ENCODE measurements at regions of chr19 and their contacts with region 1.

Region 1: GRCh38 chr19:18419195-18419698 is at the start of gene SSBP4:
- DNase-seq: peak; percentile 48 to 80
- H3K4me3 ChIP-seq: peak within 1 kb of the TSS; percentile 68
- H3K27ac ChIP-seq: no peak within 1 kb of the TSS
- H3K4me1 ChIP-seq: peaks cover 52% of the 10 kb centered on the region
- H3K27me3 ChIP-seq: no peaks in the 10 kb centered on the region
- CTCF ChIP-seq: no peak; the same call in 1 of the 2 replicates
- total RNA-seq, gene SSBP4: 56.6 and 65.2 TPM in 2 replicates

Region 2: DNA sequence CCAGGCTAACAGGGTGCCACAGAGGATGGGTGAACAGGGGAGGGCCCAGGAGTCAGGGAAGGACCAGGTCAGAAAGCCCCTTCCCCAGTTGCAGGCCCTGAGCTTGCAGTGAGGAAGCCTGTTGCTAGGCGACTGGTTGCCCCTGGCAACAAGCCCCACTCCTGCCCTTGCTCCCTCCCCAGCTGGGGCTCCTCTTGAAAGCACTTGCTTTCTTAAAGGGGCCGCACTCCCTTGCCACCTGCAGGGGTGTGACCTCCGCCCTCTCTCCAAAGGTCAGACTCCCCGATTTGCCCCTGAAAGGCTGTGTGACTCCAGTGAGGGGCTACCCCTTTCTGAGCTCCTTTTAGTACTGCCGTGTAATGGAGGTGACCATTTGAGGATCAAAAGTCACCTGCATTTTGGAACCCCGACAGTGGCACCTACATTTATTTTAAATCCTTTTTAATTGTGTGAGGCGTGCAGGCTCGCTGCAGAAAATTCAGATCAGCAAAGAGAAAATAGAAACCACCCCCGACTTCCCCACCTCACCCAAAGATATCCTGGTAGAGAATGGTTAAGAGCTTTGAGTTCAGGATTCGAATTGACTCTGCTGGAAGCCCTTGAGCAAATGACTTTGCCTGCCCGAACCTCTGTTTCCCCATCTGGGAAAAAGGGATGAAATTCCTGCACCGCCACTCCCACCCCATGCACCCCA is 663.1 kb before region 1 on chr19:
- CTCF ChIA-PET with region 1: no interaction called
- POLR2A ChIA-PET with region 1: no interaction called
- intact Hi-C with region 1: no loop called
- DNase-seq: peak in 1 of 2 experiments; percentile 29
- H3K4me3 ChIP-seq: no peak overlapping the region
- H3K27ac ChIP-seq: no peak overlapping the region
- H3K4me1 ChIP-seq: no peaks in the 10 kb centered on the region
- H3K27me3 ChIP-seq: no peaks in the 10 kb centered on the region
- CTCF ChIP-seq: no peak

Region 3: DNA sequence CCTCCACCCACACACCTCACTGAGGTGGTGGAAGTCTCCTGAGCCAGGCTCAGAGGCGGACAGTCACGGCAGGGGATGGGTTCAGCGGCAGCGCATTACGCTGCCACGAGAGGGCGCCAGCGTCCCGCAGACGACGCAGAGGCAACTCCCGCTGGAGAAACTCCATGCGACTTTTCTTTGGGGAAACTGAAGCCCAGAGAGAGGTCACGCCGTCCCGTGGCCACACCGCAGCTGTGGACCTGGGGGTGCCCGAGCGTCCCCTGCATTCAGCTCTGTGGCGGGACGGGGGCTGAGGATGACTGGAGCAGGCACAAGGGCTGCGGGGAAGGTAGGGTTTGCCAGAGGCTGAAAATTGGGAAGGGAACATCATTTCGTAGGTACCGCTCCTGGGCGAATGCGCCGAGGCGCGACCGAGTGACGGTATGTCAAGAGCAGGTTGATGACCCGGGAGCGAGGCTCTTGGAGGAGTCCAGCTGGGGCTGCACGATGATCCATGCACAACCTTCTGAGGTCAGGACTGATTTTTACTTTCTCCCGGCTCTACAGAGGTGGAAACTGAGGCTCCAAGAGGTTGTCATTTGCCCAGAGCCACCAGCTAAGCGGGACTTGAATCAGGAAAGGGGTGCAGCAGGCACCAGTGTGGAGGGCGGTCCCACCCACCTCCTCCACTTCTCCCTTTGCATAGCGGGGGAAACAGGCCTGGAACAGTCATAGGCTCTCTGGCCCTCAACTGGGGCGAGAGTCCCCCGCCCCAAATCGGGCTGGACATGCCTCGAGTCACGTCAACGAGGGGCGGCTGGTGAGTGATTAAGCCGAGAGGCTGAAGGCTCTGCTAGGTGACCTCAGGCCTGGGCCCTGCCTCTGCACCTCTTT is 412.0 kb before region 1 on chr19:
- CTCF ChIA-PET with region 1: no interaction called
- POLR2A ChIA-PET with region 1: no interaction called
- intact Hi-C with region 1: loop called (anchors 5 kb)
- DNase-seq: peak; percentile 63 to 80
- H3K4me3 ChIP-seq: peak overlapping the region; percentile 29
- H3K27ac ChIP-seq: no peak overlapping the region
- H3K4me1 ChIP-seq: peaks cover 9% of the 10 kb centered on the region; the same call in 1 of the 2 replicates
- H3K27me3 ChIP-seq: no peaks in the 10 kb centered on the region
- CTCF ChIP-seq: peak; percentile 98

Region 4: GRCh38 chr19:18152444-18152816 is 266.8 kb before region 1 on chr19:
- CTCF ChIA-PET with region 1: no interaction called
- POLR2A ChIA-PET with region 1: no interaction called
- intact Hi-C with region 1: loop called (anchors 5 kb)
- DNase-seq: peak; percentile 92 to 93
- H3K4me3 ChIP-seq: peak overlapping the region; percentile 73
- H3K27ac ChIP-seq: peak overlapping the region; percentile 91
- H3K4me1 ChIP-seq: peaks cover 15% of the 10 kb centered on the region
- H3K27me3 ChIP-seq: no peaks in the 10 kb centered on the region
- CTCF ChIP-seq: peak; percentile 82

Region 5: GRCh38 chr19:18251587-18252369 is 167.5 kb before region 1 on chr19:
- CTCF ChIA-PET with region 1: no interaction called
- POLR2A ChIA-PET with region 1: no interaction called
- intact Hi-C with region 1: loop called (anchors 10 kb)
- DNase-seq: peak; percentile 64 to 70
- H3K4me3 ChIP-seq: no peak overlapping the region
- H3K27ac ChIP-seq: no peak overlapping the region
- H3K4me1 ChIP-seq: peaks cover 39% of the 10 kb centered on the region
- H3K27me3 ChIP-seq: no peaks in the 10 kb centered on the region
- CTCF ChIP-seq: peak; percentile 100

Region 6: DNA sequence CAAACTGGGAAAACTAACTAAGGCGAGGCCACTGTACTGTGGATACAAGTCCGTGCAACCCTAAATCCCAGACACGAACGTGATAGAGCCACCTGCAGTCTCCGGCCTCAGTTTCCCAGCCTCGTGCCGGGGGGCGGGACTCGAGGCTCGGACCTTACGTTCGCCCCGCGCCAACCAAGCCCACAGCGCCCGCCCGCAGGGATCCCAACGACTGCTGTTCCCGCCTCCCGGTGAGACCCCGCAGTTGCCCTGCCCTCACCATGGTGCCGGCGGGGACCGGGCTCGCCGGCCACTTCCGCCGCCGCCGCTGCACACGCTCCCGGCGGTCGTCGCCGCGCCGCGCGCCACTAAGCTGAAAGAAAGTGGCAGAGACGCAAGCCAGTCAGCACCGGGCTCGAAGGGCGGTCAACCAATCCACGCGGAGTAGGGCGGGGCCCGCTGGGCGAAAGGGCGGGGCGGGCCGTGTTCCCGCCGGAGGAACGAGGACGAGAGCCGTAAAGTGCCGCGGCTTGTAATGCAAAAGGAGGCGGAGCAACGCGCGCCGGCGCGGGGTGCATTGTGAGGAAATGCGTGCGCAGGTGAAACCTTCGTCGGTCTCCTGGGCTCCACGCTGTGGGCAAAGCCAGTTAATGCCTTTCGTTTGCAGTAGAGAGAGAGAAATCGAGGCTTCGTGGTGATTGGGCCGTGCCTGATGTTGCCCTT is 96.3 kb before region 1 on chr19 and contains the start of gene LSM4:
- CTCF ChIA-PET with region 1: interaction called, 5 read pairs
- POLR2A ChIA-PET with region 1: interaction called, 14 read pairs
- intact Hi-C with region 1: no loop called
- DNase-seq: peak; percentile 97 to 99
- H3K4me3 ChIP-seq: peak within 1 kb of the TSS; percentile 76
- H3K27ac ChIP-seq: peak within 1 kb of the TSS; percentile 84
- H3K4me1 ChIP-seq: peaks cover 37% of the 10 kb centered on the region
- H3K27me3 ChIP-seq: no peaks in the 10 kb centered on the region
- CTCF ChIP-seq: no peak
- total RNA-seq, gene LSM4: 291 and 323 TPM in 2 replicates

Measured in PC-9 (cell line).